GM12878 (cell line): ENCODE measurements at regions of chr17 and their contacts with region 1.

Region 1: DNA sequence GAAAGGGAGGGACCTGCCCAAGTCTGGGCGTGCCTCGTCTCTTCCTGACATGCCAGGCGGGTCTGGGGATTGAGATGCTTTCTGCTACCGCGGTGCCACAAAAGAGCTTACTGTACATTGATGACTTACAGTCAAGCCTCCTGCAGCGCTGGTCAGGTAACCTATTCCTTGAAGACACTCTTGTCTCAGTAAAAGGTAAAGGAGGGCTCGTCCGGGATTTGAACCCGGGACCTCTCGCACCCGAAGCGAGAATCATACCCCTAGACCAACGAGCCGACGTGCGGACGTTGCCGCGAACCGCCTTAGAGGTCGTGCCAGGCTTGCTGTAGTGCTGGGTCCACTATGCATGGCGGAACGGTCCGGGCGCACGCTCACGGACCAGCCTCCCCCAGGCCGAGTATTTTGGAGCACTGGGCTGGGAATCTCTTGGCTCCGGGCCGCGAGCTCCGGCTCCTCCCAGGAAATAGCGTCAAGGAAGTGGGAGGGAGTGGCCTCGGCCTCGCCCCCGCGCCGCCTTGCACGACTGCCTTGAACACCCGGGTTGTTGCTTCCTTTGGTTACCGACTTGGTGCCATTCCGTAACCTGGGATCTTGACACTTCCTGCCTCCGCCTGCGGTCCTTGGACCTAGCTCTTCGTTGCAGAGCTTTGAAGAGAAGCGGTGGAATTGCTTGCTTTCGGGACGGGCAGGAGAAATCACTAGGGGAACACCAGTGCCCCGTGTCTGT is 12.4 kb upstream of the AURKB start:
- DNase-seq: peak; percentile 81
- ATAC-seq: peak; percentile 56
- H3K4me3 ChIP-seq: peak overlapping the region; percentile 83
- H3K27ac ChIP-seq: peak overlapping the region; percentile 97
- H3K4me1 ChIP-seq: peaks cover 27% of the 10 kb centered on the region
- H3K27me3 ChIP-seq: no peaks in the 10 kb centered on the region
- CTCF ChIP-seq: no peak
- EP300 ChIP-seq: peak in 1 of 2 experiments; percentile 12; a peak in 1 of 4 replicates
- POLR2A ChIP-seq: peak; percentile 81
- RAD21 ChIP-seq: no peak

Region 2: DNA sequence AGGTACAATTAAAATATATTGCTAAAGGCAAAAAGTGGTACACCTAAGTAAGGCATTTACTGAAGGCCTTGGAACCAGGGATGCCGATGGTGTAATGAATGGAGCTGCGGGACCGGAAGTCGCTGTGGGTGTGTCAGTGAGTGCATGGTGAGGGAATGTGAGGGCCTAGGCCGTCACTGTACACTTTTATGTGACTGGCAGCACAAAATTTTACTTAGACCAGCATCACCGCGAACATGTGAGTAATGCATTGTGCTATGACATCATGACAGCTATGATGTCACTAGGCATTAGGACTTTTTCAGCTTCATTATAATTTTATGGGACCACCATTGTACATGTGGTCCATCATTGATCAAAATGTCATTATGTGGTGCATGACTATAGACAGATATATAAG is 169.2 kb before region 1 on chr17:
- CTCF ChIA-PET with region 1: no interaction called
- POLR2A ChIA-PET with region 1: no interaction called
- RAD21 ChIA-PET with region 1: no interaction called
- SMC1A ChIA-PET with region 1: no interaction called
- in situ Hi-C with region 1: no loop called
- intact Hi-C with region 1: no loop called
- DNase-seq: no peak
- ATAC-seq: no peak
- H3K4me3 ChIP-seq: no peak overlapping the region
- H3K27ac ChIP-seq: no peak overlapping the region
- H3K4me1 ChIP-seq: peaks cover 14% of the 10 kb centered on the region
- H3K27me3 ChIP-seq: peaks cover 0 to 4% of the 10 kb centered on the region in 2 experiments; a peak in 1 of 4 replicates
- CTCF ChIP-seq: no peak
- EP300 ChIP-seq: no peak
- POLR2A ChIP-seq: no peak
- RAD21 ChIP-seq: no peak

Region 3: DNA sequence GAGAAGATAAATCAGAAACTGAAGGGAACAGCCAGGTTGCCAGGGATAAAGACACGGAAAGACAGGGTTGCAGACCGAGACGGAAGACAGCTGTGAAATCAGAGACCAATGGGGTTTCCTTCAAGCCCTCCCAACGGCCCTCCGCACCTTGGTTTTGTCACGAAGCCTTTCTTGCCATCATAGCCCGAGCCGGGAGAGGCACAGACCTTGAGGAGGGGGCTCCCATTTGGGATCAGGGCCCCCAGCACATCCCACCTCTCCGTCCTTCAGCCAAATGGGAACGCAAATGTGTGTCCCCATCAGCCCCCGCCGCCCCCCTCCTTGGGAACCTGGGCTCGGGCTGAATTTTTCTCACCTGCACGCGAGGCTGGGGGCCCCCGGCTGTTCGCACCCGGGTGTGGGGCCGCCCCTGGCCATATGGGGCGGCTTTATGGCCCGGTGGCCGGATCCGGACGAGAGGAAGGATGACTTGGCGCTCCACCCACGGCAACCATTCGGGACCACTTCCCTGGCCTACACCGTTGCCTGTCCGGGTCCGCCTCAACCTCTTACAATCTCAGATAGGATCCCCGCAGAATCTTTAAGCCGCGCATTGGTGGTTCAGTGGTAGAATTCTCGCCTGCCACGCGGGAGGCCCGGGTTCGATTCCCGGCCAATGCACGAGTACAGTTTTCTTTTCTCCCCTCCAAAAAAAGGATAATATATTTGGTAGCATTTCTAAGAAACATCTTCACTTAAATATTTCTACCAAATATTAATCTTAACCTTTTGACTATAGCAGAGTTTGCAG is 97.4 kb before region 1 on chr17:
- CTCF ChIA-PET with region 1: interaction called, 35 read pairs
- POLR2A ChIA-PET with region 1: interaction called, 14 read pairs
- RAD21 ChIA-PET with region 1: interaction called, 16 read pairs
- SMC1A ChIA-PET with region 1: interaction called, 14 read pairs
- in situ Hi-C with region 1: loop called (anchors 5 kb)
- intact Hi-C with region 1: no loop called
- DNase-seq: peak; percentile 64
- ATAC-seq: peak; percentile 27
- H3K4me3 ChIP-seq: peak overlapping the region; percentile 99
- H3K27ac ChIP-seq: no peak overlapping the region; the same call in 1 of the 2 replicates
- H3K4me1 ChIP-seq: peaks cover 36% of the 10 kb centered on the region
- H3K27me3 ChIP-seq: peaks cover 5 to 9% of the 10 kb centered on the region in 2 experiments
- CTCF ChIP-seq: no peak
- EP300 ChIP-seq: no peak
- POLR2A ChIP-seq: no peak
- RAD21 ChIP-seq: no peak

Region 4: DNA sequence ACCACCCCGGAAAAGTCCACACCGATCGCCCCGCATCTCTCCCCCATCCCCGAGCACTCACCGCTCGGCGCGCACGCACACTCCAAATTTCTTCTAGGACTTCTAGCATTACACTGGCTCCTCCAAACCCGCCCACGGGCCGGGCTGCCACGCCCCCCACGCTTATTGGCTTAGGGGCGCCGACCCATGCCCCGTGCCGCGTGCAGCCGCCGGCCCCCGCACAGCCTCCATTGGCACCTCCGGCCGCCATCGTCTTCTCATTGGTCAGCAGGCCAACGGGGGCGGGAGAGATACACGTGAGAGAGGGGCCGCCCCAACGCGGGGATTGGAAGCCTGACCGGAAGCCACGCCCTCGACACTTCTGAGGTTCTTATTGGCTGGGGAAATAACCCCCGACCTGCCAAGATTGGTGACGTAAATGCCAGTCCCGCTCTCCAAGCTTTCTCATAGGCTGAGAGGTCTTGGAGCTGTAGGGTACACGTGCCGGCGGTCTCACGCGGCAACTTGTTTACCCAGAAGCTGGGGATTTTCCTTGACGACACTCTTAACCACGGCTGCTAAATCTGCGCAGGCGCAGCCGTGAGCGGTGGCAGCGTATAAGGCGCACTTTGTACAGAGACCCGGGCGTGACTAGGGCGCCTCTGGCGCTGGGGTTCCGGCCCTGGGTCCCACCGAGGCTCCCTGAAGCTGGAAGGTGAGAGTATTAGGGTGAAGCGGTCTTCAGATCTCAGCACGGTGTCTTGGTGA is 66.4 kb before region 1 on chr17:
- CTCF ChIA-PET with region 1: interaction called, 11 read pairs
- POLR2A ChIA-PET with region 1: interaction called, 6 read pairs
- RAD21 ChIA-PET with region 1: interaction called, 5 read pairs
- SMC1A ChIA-PET with region 1: interaction called, 6 read pairs
- in situ Hi-C with region 1: no loop called
- intact Hi-C with region 1: no loop called
- DNase-seq: peak; percentile 100
- ATAC-seq: peak; percentile 83
- H3K4me3 ChIP-seq: peak overlapping the region; percentile 86
- H3K27ac ChIP-seq: peak overlapping the region; percentile 94
- H3K4me1 ChIP-seq: peaks cover 21% of the 10 kb centered on the region
- H3K27me3 ChIP-seq: no peaks in the 10 kb centered on the region
- CTCF ChIP-seq: peak in 1 of 3 experiments; percentile 23; a peak in 1 of 6 replicates
- EP300 ChIP-seq: peak; percentile 0 to 53; a peak in 3 of 4 replicates
- POLR2A ChIP-seq: peak; percentile 87
- RAD21 ChIP-seq: no peak

Region 5: GRCh38 chr17:8189711-8190477 is 32.9 kb before region 1 on chr17 and contains the start of gene BORCS6:
- CTCF ChIA-PET with region 1: interaction called, 53 read pairs
- POLR2A ChIA-PET with region 1: interaction called, 146 read pairs
- RAD21 ChIA-PET with region 1: interaction called, 117 read pairs
- SMC1A ChIA-PET with region 1: interaction called, 40 read pairs
- in situ Hi-C with region 1: loop called (anchors 5 kb)
- intact Hi-C with region 1: loop called (anchors 1 kb)
- DNase-seq: peak; percentile 94
- ATAC-seq: peak; percentile 75
- H3K4me3 ChIP-seq: peak within 1 kb of the TSS; percentile 75
- H3K27ac ChIP-seq: peak within 1 kb of the TSS; percentile 90
- H3K4me1 ChIP-seq: peaks cover 17% of the 10 kb centered on the region
- H3K27me3 ChIP-seq: no peaks in the 10 kb centered on the region
- CTCF ChIP-seq: peak in 2 of 3 experiments; percentile 8 to 16; a peak in 2 of 6 replicates
- EP300 ChIP-seq: no peak
- POLR2A ChIP-seq: peak; percentile 90
- RAD21 ChIP-seq: no peak
- polyA plus RNA-seq, gene BORCS6: 0.37 to 0.64 TPM

Region 6: DNA sequence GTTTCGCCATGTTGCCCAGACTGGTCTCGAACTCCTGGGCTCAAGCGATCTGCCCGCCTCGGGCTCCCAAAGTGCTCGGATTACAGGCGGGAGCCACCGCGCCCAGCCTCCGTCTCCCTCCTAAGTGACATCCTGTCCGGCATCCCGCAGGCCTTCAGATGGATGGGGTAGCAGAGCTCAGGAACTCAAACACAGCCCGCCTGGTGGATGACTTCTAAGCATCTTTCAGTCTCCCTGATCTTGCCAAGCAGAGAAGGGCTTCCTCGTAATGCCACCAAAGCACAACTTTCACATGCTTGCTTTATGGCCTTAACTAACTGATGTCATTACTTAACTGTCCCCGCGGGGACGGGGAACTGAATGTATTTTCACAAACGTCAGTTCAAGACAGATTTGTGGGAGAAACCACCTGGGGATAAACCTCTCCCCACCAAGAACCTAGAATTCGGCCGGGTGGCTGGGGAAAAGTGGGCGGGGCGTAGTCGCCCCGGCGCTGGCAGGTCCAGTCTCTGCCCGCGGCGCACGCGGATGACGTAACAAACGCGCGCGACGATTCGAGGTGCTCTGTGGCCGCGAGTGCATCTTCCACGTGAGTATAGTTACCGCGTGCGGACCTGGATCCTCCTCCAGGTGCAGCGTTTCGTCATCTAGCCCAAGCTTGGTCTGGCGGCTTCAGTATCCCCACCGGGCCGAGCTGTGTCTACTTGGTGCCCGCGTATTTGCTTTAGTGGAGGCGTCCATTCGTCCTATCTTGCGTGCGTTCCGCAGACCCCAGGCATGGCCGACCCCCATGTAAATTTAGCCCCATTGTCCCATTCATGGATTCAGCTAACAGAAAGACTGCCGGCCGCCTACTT is 26.2 kb after region 1 on chr17 and contains the start of gene PFAS:
- CTCF ChIA-PET with region 1: interaction called, 56 read pairs
- POLR2A ChIA-PET with region 1: interaction called, 161 read pairs
- RAD21 ChIA-PET with region 1: interaction called, 58 read pairs
- SMC1A ChIA-PET with region 1: interaction called, 64 read pairs
- in situ Hi-C with region 1: no loop called
- intact Hi-C with region 1: loop called (anchors 1 kb)
- DNase-seq: peak; percentile 79
- ATAC-seq: peak; percentile 64
- H3K4me3 ChIP-seq: peak within 1 kb of the TSS; percentile 100
- H3K27ac ChIP-seq: peak within 1 kb of the TSS; percentile 100
- H3K4me1 ChIP-seq: peaks cover 10% of the 10 kb centered on the region
- H3K27me3 ChIP-seq: no peaks in the 10 kb centered on the region
- CTCF ChIP-seq: no peak
- EP300 ChIP-seq: peak; percentile 30 to 57; a peak in 2 of 4 replicates
- POLR2A ChIP-seq: peak; percentile 92
- RAD21 ChIP-seq: no peak
- polyA plus RNA-seq, gene PFAS: 13.9 to 16.1 TPM

Region 7: GRCh38 chr17:8294814-8295316 is 72.1 kb after region 1 on chr17:
- CTCF ChIA-PET with region 1: interaction called, 38 read pairs
- POLR2A ChIA-PET with region 1: interaction called, 31 read pairs
- RAD21 ChIA-PET with region 1: interaction called, 19 read pairs
- SMC1A ChIA-PET with region 1: interaction called, 54 read pairs
- in situ Hi-C with region 1: no loop called
- intact Hi-C with region 1: loop called (anchors 1 kb)
- DNase-seq: no peak
- ATAC-seq: no peak
- H3K4me3 ChIP-seq: peak overlapping the region; percentile 62
- H3K27ac ChIP-seq: peak overlapping the region; percentile 41
- H3K4me1 ChIP-seq: peaks cover 21% of the 10 kb centered on the region
- H3K27me3 ChIP-seq: no peaks in the 10 kb centered on the region
- CTCF ChIP-seq: no peak
- EP300 ChIP-seq: no peak
- POLR2A ChIP-seq: no peak
- RAD21 ChIP-seq: no peak